Lower leg skin (tissue), 4 donors: ENCODE measurements at regions of chr11 and their contacts with region 1.

Region 1: DNA sequence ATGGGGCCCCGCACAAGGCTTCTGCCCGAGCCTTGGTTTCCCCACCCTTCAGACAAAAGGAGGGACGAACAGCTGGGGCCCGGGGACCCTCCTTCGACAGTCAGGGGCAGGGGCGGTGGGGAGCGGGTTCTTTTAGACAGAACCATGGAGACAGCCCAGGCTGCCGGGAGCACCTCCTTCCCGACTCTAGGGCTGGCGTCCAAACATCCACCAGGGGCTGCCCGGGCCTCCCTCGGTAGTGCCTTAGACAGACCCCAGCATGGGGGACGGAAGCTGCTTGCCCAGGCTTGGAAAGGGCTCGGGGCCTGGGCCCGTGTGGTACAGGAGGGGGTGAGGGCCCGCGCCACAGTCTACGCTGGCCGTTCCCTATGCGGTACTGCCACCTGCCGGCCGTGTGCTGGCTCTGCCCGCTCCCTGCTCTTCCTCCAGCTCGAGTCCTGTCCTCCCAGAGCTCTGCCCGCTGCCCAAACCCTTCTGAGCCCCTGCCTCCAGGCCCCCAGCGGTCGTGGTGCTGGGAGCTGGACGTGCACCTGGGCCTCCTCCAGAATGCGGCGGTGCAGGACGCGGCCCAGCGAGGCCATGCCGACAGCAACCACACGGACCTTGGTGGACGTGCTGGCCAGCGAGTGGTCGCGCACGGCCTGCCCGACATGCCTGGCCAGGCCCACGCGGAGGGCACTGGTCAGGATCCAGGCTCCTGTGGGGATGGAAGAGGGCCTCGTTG is 20.1 kb downstream of the TSSC4 start:
- DNase-seq: peak in 1 of 2 donors; percentile 94
- H3K4me3 ChIP-seq: no peak overlapping the region
- CTCF ChIP-seq: peak in 1 of 3 donors; percentile 60
- POLR2A ChIP-seq: no peak

Region 2: DNA sequence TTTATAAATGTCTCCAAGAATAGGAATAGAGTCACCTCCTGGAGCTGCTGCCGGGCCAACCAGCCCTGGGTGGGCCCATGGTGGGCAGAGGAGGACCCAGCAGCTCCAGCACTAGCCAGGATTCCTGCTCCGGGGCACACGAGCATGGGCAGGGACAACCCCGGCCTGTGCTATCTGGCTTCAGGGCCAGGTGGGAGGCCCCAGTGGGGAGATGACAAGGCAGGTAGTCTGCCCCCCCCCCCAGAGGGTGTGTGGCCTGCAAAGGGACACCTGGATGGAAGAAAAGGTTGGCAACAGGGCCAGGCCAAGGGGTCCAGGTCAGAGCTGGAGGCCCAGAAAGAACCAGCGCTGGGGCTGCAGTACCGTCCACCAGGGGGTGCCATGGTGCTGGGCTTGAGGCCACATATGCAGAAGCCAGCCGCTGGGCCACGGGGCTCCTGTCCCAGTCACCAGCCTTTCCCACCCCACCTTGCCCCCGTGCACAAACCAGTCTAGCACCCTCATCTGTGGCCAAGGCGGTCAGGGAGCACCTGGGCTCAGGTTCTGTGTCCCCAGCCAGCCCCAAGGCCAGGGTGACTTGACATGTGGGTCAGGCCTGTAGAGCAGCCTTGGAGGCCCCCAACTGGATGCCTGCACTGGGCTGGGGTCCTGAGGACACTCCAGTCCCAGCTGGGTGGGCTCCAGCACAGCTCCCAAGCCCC is 115.4 kb before region 1 on chr11:
- intact Hi-C with region 1: loop called (anchors 2 kb)
- DNase-seq: peak; percentile 75 to 97
- H3K4me3 ChIP-seq: no peak overlapping the region
- CTCF ChIP-seq: peak in 1 of 3 donors; percentile 78
- POLR2A ChIP-seq: no peak

Region 3: GRCh38 chr11:2366261-2366660 is 54.4 kb before region 1 on chr11:
- intact Hi-C with region 1: no loop called
- DNase-seq: no peak
- H3K4me3 ChIP-seq: no peak overlapping the region
- CTCF ChIP-seq: no peak
- POLR2A ChIP-seq: no peak